Heart right ventricle (tissue), 16 donors: ENCODE measurements at regions of chr4 and their contacts with region 1.

Region 1: GRCh38 chr4:99563310-99564186 is at the start of gene TRMT10A:
- DNase-seq: peak; percentile 96 to 98
- ATAC-seq: peak; percentile 97 to 99 (median 99)
- H3K4me3 ChIP-seq: peak within 1 kb of the TSS; percentile 32 to 70 (median 64)
- H3K27ac ChIP-seq: peak within 1 kb of the TSS; percentile 86 to 97 (median 94)
- H3K4me1 ChIP-seq: peaks cover 0 to 15% (median 6%) of the 10 kb centered on the region in 9 donors
- H3K27me3 ChIP-seq: peaks cover 0 to 14% (median 0%) of the 10 kb centered on the region in 7 donors
- CTCF ChIP-seq: peak in 3 of 9 donors; percentile 13 to 25 (median 17)
- total RNA-seq, gene TRMT10A: 2.8 to 5.0 (median 3.9) TPM

Region 2: DNA sequence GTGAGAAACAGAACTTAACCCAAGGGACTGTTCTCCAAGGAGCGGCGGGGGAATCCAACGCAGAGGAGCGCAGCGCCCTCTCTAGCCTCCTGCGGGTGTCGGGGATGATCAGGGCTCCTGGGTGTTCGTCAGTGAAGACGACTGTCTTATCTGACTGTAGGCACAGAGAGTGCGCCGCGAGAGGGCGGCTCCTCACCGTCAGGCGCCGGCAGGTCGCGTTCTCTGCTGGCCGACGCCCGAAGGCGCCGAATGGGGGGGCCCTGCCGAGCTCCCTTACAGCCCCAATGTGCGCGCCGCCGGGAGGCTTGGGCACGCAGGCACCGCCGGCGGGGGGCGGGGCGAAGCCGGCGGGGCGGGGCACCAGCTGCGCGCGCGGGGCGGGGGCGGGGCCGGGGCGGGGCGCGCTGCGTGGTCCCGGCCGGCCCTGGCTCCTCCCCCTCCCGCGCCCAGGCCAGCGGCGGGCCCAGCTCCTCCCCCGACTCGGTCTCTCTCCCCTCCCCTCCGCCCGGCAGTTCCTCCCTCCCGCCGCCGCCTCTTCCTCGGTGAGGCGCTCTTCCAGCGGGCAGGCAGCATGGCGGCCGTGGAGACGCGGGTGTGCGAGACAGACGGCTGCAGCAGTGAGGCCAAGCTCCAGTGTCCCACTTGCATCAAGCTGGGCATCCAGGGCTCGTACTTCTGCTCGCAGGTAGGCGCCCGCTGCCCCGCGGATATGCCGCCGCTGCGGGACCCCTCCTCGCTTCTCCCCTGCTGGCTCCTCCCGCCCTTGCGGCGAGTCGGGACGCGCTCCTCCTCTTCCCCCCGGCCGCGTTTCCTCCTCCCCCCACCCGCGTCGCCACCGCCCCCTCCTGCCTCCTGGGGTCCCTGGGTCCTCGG is 568.1 kb before region 1 on chr4 and contains the start of gene METAP1:
- intact Hi-C with region 1: loop called in 1 of 10 experiments (anchors 5 kb)
- DNase-seq: peak; percentile 90 to 94
- ATAC-seq: peak; percentile 94 to 98 (median 96)
- H3K4me3 ChIP-seq: peak within 1 kb of the TSS; percentile 73 to 99 (median 96)
- H3K27ac ChIP-seq: peak within 1 kb of the TSS; percentile 86 to 95 (median 93)
- H3K4me1 ChIP-seq: peaks cover 0 to 28% (median 13%) of the 10 kb centered on the region in 9 donors
- H3K27me3 ChIP-seq: no peaks in the 10 kb centered on the region
- CTCF ChIP-seq: peak; percentile 5 to 80 (median 49)
- total RNA-seq, gene METAP1: 54.2 to 79.7 (median 60.9) TPM

Region 3: GRCh38 chr4:99518601-99519295 is 44.8 kb before region 1 on chr4:
- intact Hi-C with region 1: no loop called
- DNase-seq: no peak
- ATAC-seq: no peak
- H3K4me3 ChIP-seq: no peak overlapping the region
- H3K27ac ChIP-seq: no peak overlapping the region
- H3K4me1 ChIP-seq: no peaks in the 10 kb centered on the region
- H3K27me3 ChIP-seq: peaks cover 0 to 2% (median 0%) of the 10 kb centered on the region in 7 donors
- CTCF ChIP-seq: no peak

Region 4: GRCh38 chr4:99679204-99679603 is 115.7 kb after region 1 on chr4:
- intact Hi-C with region 1: loop called in 2 of 10 experiments (anchors 5 to 10 kb)
- DNase-seq: peak; percentile 34 to 68
- ATAC-seq: peak; percentile 90 to 97 (median 96)
- H3K4me3 ChIP-seq: no peak overlapping the region
- H3K27ac ChIP-seq: peak overlapping the region in 9 of 10 donors; percentile 5 to 73 (median 45)
- H3K4me1 ChIP-seq: peaks cover 0 to 24% (median 5%) of the 10 kb centered on the region in 9 donors
- H3K27me3 ChIP-seq: no peaks in the 10 kb centered on the region
- CTCF ChIP-seq: peak in 5 of 9 donors; percentile 8 to 27 (median 18)

Region 5: GRCh38 chr4:99800332-99801004 is 236.9 kb after region 1 on chr4:
- intact Hi-C with region 1: loop called in 5 of 10 experiments (anchors 2 to 5 kb)
- DNase-seq: peak in 1 of 2 donors; percentile 17
- ATAC-seq: peak in 5 of 8 donors; percentile 73 to 94 (median 88)
- H3K4me3 ChIP-seq: no peak overlapping the region
- H3K27ac ChIP-seq: peak overlapping the region in 1 of 10 donors; percentile 55
- H3K4me1 ChIP-seq: peaks cover 0 to 26% (median 3%) of the 10 kb centered on the region in 9 donors
- H3K27me3 ChIP-seq: peaks cover 0 to 7% (median 0%) of the 10 kb centered on the region in 7 donors
- CTCF ChIP-seq: no peak

Region 6: DNA sequence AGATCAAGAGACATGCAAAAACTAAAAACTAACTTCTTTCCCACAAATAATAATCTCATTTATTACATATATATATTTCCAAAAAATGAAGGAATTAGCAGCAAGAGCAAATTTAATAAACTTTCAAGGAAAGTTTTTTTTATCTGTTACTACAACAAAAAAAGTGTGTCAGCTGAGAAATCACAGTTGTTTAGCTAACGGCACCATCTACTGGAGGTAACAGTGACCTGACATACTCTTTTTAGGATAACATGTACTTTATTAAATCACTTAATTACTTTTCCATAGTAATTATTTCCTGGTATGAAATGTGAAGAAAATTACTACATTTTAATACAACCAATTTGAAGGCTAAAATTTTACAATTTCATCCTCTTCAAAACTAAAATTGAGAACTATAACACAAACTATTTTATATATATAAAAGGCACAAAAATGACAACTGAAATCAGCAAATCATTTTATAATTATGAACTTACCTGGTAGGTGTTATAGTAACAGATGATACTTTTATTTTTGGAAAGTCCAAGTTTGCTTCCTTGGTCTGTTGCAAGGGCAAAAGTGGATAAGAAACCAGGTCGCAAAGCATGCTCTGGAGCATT is 321.6 kb after region 1 on chr4:
- intact Hi-C with region 1: loop called in 8 of 10 experiments (anchors 5 to 10 kb)
- DNase-seq: no peak
- ATAC-seq: no peak
- H3K4me3 ChIP-seq: no peak overlapping the region
- H3K27ac ChIP-seq: no peak overlapping the region
- H3K4me1 ChIP-seq: peaks cover 0 to 23% (median 7%) of the 10 kb centered on the region in 9 donors
- H3K27me3 ChIP-seq: no peaks in the 10 kb centered on the region
- CTCF ChIP-seq: peak in 8 of 9 donors; percentile 26 to 60 (median 51)

Region 7: GRCh38 chr4:99949034-99949998 is 385.8 kb after region 1 on chr4:
- intact Hi-C with region 1: loop called in 9 of 10 experiments (anchors 1 to 5 kb)
- DNase-seq: peak; percentile 79 to 90
- ATAC-seq: peak; percentile 10 to 50 (median 40)
- H3K4me3 ChIP-seq: peak overlapping the region; percentile 67 to 95 (median 80)
- H3K27ac ChIP-seq: peak overlapping the region; percentile 14 to 96 (median 88)
- H3K4me1 ChIP-seq: peaks cover 3 to 52% (median 45%) of the 10 kb centered on the region in 9 donors
- H3K27me3 ChIP-seq: no peaks in the 10 kb centered on the region
- CTCF ChIP-seq: peak; percentile 76 to 92 (median 86)